H1 (cell line): ENCODE measurements at regions of chr1 and their contacts with region 1.

Region 1: GRCh38 chr1:169928438-169929209 is 34.9 kb upstream of the SCYL3 start:
- DNase-seq: no peak
- H3K4me3 ChIP-seq: no peak overlapping the region
- H3K27ac ChIP-seq: no peak overlapping the region
- H3K4me1 ChIP-seq: no peaks in the 10 kb centered on the region
- H3K27me3 ChIP-seq: no peaks in the 10 kb centered on the region
- CTCF ChIP-seq: peak in 2 of 3 experiments; percentile 43 to 62; a peak in 2 of 4 replicates
- EP300 ChIP-seq: no peak
- POLR2A ChIP-seq: no peak
- RAD21 ChIP-seq: peak; percentile 76 to 87

Region 2: DNA sequence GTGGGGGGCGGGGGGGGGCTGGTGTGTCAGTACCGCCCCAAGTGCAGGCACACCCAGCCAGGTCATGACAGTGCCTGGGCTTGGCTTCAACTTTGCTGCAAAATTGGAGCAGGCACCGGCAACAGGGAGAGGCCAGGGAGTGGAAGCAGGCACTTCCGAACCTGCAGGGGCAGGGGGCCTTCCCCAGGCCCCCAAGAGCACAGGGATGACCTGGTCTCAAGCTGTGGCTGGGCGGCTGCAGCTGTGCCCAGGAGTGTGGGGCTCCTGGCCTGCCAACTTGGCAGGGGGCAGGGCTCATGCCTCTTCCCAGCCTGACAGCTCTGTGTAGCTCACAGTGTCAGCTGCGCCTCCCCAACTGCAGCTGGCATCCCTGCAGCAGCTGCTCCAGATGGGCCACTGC is 16.5 kb after region 1 on chr1:
- CTCF ChIA-PET with region 1: interaction called, 11 read pairs
- POLR2A ChIA-PET with region 1: no interaction called
- DNase-seq: no peak
- H3K4me3 ChIP-seq: no peak overlapping the region
- H3K27ac ChIP-seq: no peak overlapping the region
- H3K4me1 ChIP-seq: no peaks in the 10 kb centered on the region
- H3K27me3 ChIP-seq: no peaks in the 10 kb centered on the region
- CTCF ChIP-seq: no peak
- EP300 ChIP-seq: no peak
- POLR2A ChIP-seq: no peak
- RAD21 ChIP-seq: no peak